ENCODE measurements at regions of chr10 and their contacts with region 1.

Region 1: GRCh38 chr10:21150166-21150565 is 253.1 kb upstream of the NEBL start:
- DNase-seq: no peak
- H3K4me3 ChIP-seq: no peak overlapping the region
- H3K27me3 ChIP-seq: no peaks in the 10 kb centered on the region
- CTCF ChIP-seq: no peak

Region 2: GRCh38 chr10:20760460-20760859 is 389.7 kb before region 1 on chr10:
- CTCF ChIA-PET with region 1: no interaction called
- POLR2A ChIA-PET with region 1: no interaction called
- DNase-seq: no peak
- H3K4me3 ChIP-seq: no peak overlapping the region
- H3K27me3 ChIP-seq: no peaks in the 10 kb centered on the region
- CTCF ChIP-seq: no peak

Region 3: GRCh38 chr10:21161647-21162046 is 11.5 kb after region 1 on chr10:
- CTCF ChIA-PET with region 1: no interaction called
- POLR2A ChIA-PET with region 1: interaction called, 12 read pairs
- DNase-seq: no peak
- H3K4me3 ChIP-seq: no peak overlapping the region
- H3K27me3 ChIP-seq: no peaks in the 10 kb centered on the region
- CTCF ChIP-seq: no peak

Region 4: DNA sequence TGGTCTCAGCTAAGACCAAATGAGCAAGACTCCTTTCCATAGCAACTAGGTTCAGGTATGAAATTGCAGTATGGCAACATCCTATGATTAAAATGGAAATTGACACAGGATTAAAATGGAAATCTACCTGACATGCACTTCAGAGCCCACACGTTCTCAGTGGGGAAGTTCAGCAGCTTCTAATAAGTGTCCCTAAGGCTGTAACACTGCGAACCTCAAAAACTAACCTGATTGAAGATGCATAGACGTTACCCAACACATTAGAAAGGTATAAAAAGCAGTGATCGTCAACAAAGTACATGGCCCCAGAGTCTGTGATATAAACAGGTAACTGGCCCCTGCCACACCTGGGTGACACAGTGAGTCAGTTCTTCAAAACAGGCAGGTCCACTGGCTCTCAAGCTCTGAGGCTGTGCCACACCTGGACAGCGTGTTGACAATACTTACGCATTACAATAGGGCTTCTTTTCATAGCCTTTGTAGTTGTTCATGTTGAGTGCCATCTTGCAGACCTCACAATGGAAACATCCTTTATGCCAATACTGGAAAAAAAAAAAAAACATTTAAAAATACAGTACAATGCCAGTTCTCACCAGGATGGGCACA is 21.9 kb after region 1 on chr10:
- CTCF ChIA-PET with region 1: no interaction called
- POLR2A ChIA-PET with region 1: no interaction called
- DNase-seq: no peak
- H3K4me3 ChIP-seq: no peak overlapping the region
- H3K27me3 ChIP-seq: peaks cover 21% of the 10 kb centered on the region
- CTCF ChIP-seq: no peak

Measured in BJ (cell line).